Mammary epithelial cell (primary cell): ENCODE measurements at regions of chr2 and their contacts with region 1.

Region 1: GRCh38 chr2:27032495-27033252 is at the start of gene TMEM214:
- DNase-seq: peak; percentile 80
- H3K4me3 ChIP-seq: peak within 1 kb of the TSS; percentile 70 to 100 (median 96)
- H3K27ac ChIP-seq: peak within 1 kb of the TSS; percentile 71
- H3K4me1 ChIP-seq: peaks cover 11% of the 10 kb centered on the region
- H3K27me3 ChIP-seq: no peaks in the 10 kb centered on the region
- CTCF ChIP-seq: no peak
- total RNA-seq, gene TMEM214: 27.3 to 90.7 TPM

Region 2: DNA sequence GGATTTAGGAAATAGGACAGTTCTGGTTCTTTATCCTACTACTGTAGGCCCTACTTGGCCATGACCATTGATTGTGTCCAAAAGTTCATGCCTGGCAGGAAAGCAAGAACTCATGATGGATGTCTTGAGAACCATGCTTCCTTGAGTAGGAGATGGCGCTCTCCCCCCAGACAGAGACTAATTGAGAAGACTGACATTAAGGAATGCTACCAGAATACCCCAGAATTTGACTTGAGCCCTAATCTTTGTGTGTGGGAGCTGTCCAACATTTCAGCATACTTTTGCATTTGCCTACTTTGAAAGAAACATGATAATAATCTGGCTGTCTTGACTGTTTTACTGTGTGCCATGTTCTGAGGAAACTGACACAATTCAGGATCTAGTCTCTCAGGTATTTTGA is 38.9 kb before region 1 on chr2:
- CTCF ChIA-PET with region 1: no interaction called
- dilution Hi-C with region 1: loop called (anchors 5 kb)
- in situ Hi-C with region 1: no loop called
- intact Hi-C with region 1: no loop called
- DNase-seq: no peak
- H3K4me3 ChIP-seq: no peak overlapping the region
- H3K27ac ChIP-seq: no peak overlapping the region
- H3K4me1 ChIP-seq: no peaks in the 10 kb centered on the region
- H3K27me3 ChIP-seq: no peaks in the 10 kb centered on the region
- CTCF ChIP-seq: no peak

Region 3: DNA sequence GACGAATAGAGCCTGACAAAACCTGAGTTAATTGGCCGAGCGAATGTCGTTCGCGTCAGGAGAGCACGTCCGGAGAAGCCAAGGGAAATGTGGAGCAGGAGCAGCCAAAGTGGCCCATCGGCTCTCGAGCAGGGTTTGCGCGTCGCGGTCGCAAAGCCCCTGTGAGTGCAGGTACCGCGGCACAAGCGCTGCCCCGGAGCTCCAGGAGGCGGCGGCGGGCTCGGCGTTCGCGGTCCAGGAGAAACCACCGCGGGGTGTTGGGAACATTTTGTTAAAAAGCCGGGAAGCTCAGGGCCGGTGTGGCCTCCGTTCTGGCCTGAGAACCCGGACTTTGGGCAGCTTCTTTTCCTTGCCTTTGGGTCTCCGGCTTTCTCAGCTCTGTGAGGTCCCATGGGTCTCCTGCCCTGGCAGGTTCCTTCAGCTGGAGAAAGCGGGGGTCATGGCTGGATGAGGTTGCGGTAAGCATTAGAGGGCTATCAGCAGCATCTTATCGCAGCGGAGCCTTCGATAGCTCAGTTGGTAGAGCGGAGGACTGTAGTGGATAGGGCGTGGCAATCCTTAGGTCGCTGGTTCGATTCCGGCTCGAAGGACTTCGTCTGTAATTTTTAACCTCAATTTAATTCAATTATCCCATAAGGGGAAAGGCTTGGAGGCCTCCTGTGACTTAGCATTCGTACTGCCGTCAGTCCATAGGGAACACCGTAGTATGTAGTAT is 17.8 kb after region 1 on chr2:
- CTCF ChIA-PET with region 1: no interaction called
- dilution Hi-C with region 1: no loop called
- in situ Hi-C with region 1: no loop called
- intact Hi-C with region 1: loop called (anchors 1 kb)
- DNase-seq: peak; percentile 91
- H3K4me3 ChIP-seq: peak overlapping the region; percentile 59 to 99 (median 74)
- H3K27ac ChIP-seq: peak overlapping the region; percentile 37
- H3K4me1 ChIP-seq: peaks cover 15% of the 10 kb centered on the region
- H3K27me3 ChIP-seq: no peaks in the 10 kb centered on the region
- CTCF ChIP-seq: peak in 1 of 2 donors; percentile 51

Region 4: GRCh38 chr2:27322766-27323595 is 290.3 kb after region 1 on chr2 and contains the start of gene MPV17:
- CTCF ChIA-PET with region 1: no interaction called
- dilution Hi-C with region 1: no loop called
- in situ Hi-C with region 1: no loop called
- intact Hi-C with region 1: no loop called
- DNase-seq: peak; percentile 90
- H3K4me3 ChIP-seq: peak within 1 kb of the TSS; percentile 61 to 80 (median 79)
- H3K27ac ChIP-seq: peak within 1 kb of the TSS; percentile 94
- H3K4me1 ChIP-seq: peaks cover 21% of the 10 kb centered on the region
- H3K27me3 ChIP-seq: no peaks in the 10 kb centered on the region
- CTCF ChIP-seq: no peak
- total RNA-seq, gene MPV17: 37.2 to 69.1 TPM